Mammary epithelial cell (primary cell): ENCODE measurements at regions of chr6 and their contacts with region 1.

Region 1: GRCh38 chr6:39302669-39303424 is 11.4 kb downstream of the KCNK17 start:
- DNase-seq: peak; percentile 56
- H3K4me3 ChIP-seq: peak overlapping the region in 1 of 3 experiments; percentile 16
- H3K27ac ChIP-seq: no peak overlapping the region
- H3K4me1 ChIP-seq: no peaks in the 10 kb centered on the region
- H3K27me3 ChIP-seq: peaks cover 3% of the 10 kb centered on the region
- CTCF ChIP-seq: peak; percentile 75 to 89

Region 2: GRCh38 chr6:39003072-39003471 is 299.8 kb before region 1 on chr6:
- CTCF ChIA-PET with region 1: no interaction called
- dilution Hi-C with region 1: no loop called
- in situ Hi-C with region 1: no loop called
- intact Hi-C with region 1: loop called (anchors 1 kb)
- DNase-seq: peak; percentile 9
- H3K4me3 ChIP-seq: no peak overlapping the region
- H3K27ac ChIP-seq: no peak overlapping the region
- H3K4me1 ChIP-seq: no peaks in the 10 kb centered on the region
- H3K27me3 ChIP-seq: peaks cover 8% of the 10 kb centered on the region
- CTCF ChIP-seq: peak; percentile 42 to 61

Region 3: DNA sequence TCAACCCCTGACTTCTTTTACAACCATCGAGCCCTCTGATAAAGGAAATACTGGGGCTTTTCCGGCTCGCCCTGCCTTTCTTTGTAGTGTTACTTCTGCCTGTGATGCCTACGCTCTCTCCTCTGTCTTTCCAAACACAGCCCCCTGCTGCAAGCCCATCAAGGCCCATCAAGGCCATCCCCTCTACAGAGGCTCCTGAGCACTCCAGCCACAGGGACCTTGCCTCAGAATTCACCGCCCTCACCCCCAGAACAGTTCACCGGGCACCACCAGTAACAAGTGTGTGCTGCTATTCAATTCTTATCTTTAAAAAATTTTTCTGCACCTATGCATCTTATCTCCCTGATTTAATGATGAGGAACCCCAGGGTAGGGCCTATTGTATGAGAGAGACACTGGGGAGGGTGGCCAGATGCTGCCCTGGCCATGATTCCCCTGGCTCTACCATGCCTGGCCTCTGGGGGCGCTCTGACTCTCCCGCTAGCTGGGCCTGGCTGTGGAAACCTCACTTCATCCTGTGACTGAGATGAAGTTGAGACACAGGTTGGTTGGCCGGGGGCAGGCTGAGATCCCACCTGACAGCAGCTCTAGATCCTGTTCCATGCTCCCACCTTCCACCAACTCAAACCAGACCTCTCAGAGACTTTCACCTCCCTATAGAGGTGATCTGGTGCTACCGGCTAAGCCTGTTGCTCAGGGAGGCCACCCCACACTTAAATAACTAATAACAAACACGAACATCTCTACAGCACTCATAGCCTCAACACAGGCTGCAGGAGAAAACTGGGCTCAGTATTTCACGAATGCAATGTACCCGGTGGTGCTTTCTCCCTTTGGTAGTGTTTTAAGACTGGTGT is 273.5 kb before region 1 on chr6:
- CTCF ChIA-PET with region 1: no interaction called
- dilution Hi-C with region 1: no loop called
- in situ Hi-C with region 1: no loop called
- intact Hi-C with region 1: loop called (anchors 1 kb)
- DNase-seq: no peak
- H3K4me3 ChIP-seq: no peak overlapping the region
- H3K27ac ChIP-seq: no peak overlapping the region
- H3K4me1 ChIP-seq: peaks cover 3% of the 10 kb centered on the region
- H3K27me3 ChIP-seq: no peaks in the 10 kb centered on the region
- CTCF ChIP-seq: peak; percentile 71 to 76